GM12878 (cell line): ENCODE measurements at regions of chr5 and their contacts with region 1.

Region 1: GRCh38 chr5:157253547-157253946 is 12.4 kb upstream of the CYFIP2 start:
- DNase-seq: no peak
- ATAC-seq: peak; percentile 82
- H3K4me3 ChIP-seq: peak overlapping the region; percentile 4; the same call in 1 of the 2 replicates
- H3K27ac ChIP-seq: no peak overlapping the region; the same call in 1 of the 2 replicates
- H3K4me1 ChIP-seq: peaks cover 15% of the 10 kb centered on the region
- H3K27me3 ChIP-seq: no peaks in the 10 kb centered on the region
- CTCF ChIP-seq: peak; percentile 85 to 97 (median 88)
- EP300 ChIP-seq: no peak
- POLR2A ChIP-seq: no peak
- RAD21 ChIP-seq: peak; percentile 97

Region 2: GRCh38 chr5:156971415-156971814 is 282.1 kb before region 1 on chr5:
- CTCF ChIA-PET with region 1: no interaction called
- POLR2A ChIA-PET with region 1: no interaction called
- RAD21 ChIA-PET with region 1: no interaction called
- SMC1A ChIA-PET with region 1: no interaction called
- in situ Hi-C with region 1: no loop called
- intact Hi-C with region 1: no loop called
- DNase-seq: no peak
- ATAC-seq: no peak
- H3K4me3 ChIP-seq: no peak overlapping the region
- H3K27ac ChIP-seq: no peak overlapping the region
- H3K4me1 ChIP-seq: no peaks in the 10 kb centered on the region
- H3K27me3 ChIP-seq: no peaks in the 10 kb centered on the region
- CTCF ChIP-seq: no peak
- EP300 ChIP-seq: no peak
- POLR2A ChIP-seq: no peak
- RAD21 ChIP-seq: no peak

Region 3: GRCh38 chr5:157142317-157143126 is 111.0 kb before region 1 on chr5 and contains the start of gene MED7:
- CTCF ChIA-PET with region 1: interaction called, 244 read pairs
- POLR2A ChIA-PET with region 1: interaction called, 5 read pairs
- RAD21 ChIA-PET with region 1: interaction called, 159 read pairs
- SMC1A ChIA-PET with region 1: interaction called, 138 read pairs
- in situ Hi-C with region 1: loop called (anchors 5 kb)
- intact Hi-C with region 1: no loop called
- DNase-seq: peak; percentile 99
- ATAC-seq: peak; percentile 100
- H3K4me3 ChIP-seq: peak within 1 kb of the TSS; percentile 88
- H3K27ac ChIP-seq: peak within 1 kb of the TSS; percentile 99
- H3K4me1 ChIP-seq: peaks cover 7% of the 10 kb centered on the region
- H3K27me3 ChIP-seq: no peaks in the 10 kb centered on the region
- CTCF ChIP-seq: no peak
- EP300 ChIP-seq: no peak
- POLR2A ChIP-seq: peak; percentile 96
- RAD21 ChIP-seq: no peak
- polyA plus RNA-seq, gene MED7: 42.6 to 47.7 TPM

Region 4: DNA sequence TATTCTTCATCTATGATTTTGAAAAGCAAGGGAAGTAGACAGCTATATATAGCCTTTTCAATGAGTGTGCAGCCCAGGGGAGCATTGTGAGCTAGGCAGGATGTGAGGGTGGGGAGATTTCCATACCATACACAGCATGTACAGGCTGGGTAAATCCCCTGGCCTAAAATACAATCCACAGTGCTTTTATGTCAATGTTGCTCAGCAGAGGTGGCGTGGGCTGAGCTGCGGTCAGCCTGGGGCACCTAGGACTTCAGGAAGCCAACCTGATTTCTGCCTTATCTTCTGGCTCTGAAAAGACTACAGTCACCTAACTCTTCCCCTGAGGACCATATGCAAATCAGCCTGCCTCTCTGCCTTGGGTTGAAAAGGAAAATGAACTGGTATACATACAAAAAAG is 81.1 kb before region 1 on chr5:
- CTCF ChIA-PET with region 1: interaction called, 29 read pairs
- POLR2A ChIA-PET with region 1: interaction called, 7 read pairs
- RAD21 ChIA-PET with region 1: interaction called, 44 read pairs
- SMC1A ChIA-PET with region 1: interaction called, 47 read pairs
- in situ Hi-C with region 1: no loop called
- intact Hi-C with region 1: loop called (anchors 1 kb)
- DNase-seq: peak; percentile 98
- ATAC-seq: peak; percentile 98
- H3K4me3 ChIP-seq: no peak overlapping the region
- H3K27ac ChIP-seq: peak overlapping the region; percentile 93
- H3K4me1 ChIP-seq: peaks cover 14% of the 10 kb centered on the region
- H3K27me3 ChIP-seq: no peaks in the 10 kb centered on the region
- CTCF ChIP-seq: no peak
- EP300 ChIP-seq: peak; percentile 88 to 94; a peak in 3 of 4 replicates
- POLR2A ChIP-seq: no peak
- RAD21 ChIP-seq: 0 out of 2 replicates have a peak, but pooled peaks have one; percentile 30

Region 5: DNA sequence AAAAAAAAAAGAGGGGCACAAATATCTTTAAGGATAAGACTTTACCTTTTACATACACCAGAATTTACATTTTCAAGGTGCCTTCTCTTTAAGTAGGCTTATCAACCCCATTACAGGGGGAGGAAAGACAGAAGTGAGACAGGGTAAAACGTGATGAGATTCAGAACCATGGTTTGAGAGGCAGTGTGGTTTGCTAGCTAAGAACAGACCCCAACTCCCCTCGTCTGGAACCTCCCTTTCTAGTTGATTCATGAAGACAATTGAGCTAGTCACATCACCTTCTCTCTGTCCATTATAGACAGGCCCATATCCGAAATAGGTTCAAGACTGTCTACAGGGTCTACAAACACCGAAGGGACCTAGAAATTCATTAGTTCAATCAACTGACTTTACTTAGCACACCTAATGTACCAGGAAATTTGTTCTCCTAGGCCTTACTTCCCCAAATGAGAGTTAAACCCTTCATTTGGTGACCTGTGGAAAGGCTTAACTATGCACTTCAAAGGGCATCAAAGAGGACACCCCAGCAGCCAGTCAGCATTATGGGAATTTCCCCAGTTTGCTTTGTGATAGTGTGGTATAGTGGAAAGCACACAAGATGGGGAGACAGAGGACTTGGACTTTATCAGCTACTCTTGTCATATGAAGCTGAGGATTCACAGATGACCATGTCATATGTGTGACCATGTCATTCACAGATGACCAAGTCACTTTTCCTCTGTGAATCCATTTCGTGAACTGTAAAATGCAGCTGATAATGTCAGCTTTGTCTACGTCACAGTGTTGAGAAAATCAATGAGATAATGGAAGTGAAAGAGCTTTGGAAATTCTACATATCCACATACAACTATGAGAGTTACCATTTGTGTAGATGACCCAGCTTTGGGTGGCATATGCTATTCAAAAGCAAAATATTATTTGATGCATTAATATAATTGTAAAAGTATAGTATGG is 27.8 kb before region 1 on chr5:
- CTCF ChIA-PET with region 1: interaction called, 20 read pairs
- POLR2A ChIA-PET with region 1: interaction called, 6 read pairs
- RAD21 ChIA-PET with region 1: interaction called, 16 read pairs
- SMC1A ChIA-PET with region 1: interaction called, 16 read pairs
- in situ Hi-C with region 1: no loop called
- intact Hi-C with region 1: loop called (anchors 2 kb)
- DNase-seq: no peak
- ATAC-seq: peak; percentile 61
- H3K4me3 ChIP-seq: no peak overlapping the region
- H3K27ac ChIP-seq: no peak overlapping the region
- H3K4me1 ChIP-seq: peaks cover 8% of the 10 kb centered on the region
- H3K27me3 ChIP-seq: no peaks in the 10 kb centered on the region
- CTCF ChIP-seq: no peak
- EP300 ChIP-seq: no peak
- POLR2A ChIP-seq: no peak
- RAD21 ChIP-seq: no peak

Region 6: GRCh38 chr5:157283434-157283833 is 29.9 kb after region 1 on chr5:
- CTCF ChIA-PET with region 1: interaction called, 21 read pairs
- POLR2A ChIA-PET with region 1: no interaction called
- RAD21 ChIA-PET with region 1: interaction called, 10 read pairs
- SMC1A ChIA-PET with region 1: interaction called, 23 read pairs
- in situ Hi-C with region 1: no loop called
- intact Hi-C with region 1: no loop called
- DNase-seq: peak; percentile 65
- ATAC-seq: peak; percentile 99
- H3K4me3 ChIP-seq: no peak overlapping the region
- H3K27ac ChIP-seq: no peak overlapping the region
- H3K4me1 ChIP-seq: peaks cover 21% of the 10 kb centered on the region
- H3K27me3 ChIP-seq: no peaks in the 10 kb centered on the region
- CTCF ChIP-seq: no peak
- EP300 ChIP-seq: no peak
- POLR2A ChIP-seq: no peak
- RAD21 ChIP-seq: no peak

Region 7: DNA sequence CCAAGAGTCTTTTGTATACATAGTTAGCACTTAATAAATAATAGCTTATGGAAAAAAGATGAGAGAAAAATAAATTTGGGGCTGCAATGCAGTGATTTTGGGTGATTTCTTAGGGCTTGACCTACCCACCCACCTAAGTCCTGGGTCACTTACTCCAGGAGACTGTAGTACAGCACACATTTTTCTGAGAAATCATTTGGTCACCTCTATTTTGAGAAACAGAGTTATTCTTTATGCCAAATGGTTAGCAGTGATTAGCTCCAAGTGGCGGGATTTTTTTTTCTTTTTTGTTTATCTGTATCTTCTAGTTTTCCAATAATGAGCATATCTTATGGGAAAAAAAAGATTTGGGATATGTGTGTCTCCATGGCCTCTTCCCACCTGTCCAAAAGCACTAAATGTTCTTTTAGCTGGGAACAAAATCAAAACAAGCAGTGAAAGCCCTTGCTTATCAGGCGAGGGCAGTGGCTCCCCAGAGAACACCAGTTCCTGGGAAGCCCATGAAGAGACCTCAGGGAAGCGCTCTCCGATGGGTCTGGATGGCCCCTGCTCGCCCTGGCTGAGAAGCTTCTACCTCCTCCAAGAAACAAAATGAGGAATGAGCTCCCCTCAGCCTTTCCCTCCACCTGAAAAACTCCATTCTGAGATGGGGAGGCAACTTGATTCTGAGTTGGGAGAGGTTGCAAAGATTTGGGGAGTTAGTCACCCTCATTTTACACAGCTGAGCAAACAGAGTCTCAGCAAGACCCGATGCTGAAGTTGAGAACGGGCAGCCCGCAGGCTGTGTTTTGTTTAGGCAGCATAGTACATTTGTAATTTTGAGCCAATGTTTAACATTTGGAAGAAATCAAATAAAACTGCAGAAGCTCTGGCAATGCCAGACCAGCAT is 82.2 kb after region 1 on chr5:
- CTCF ChIA-PET with region 1: interaction called, 111 read pairs
- POLR2A ChIA-PET with region 1: no interaction called
- RAD21 ChIA-PET with region 1: interaction called, 3 read pairs
- SMC1A ChIA-PET with region 1: interaction called, 13 read pairs
- in situ Hi-C with region 1: no loop called
- intact Hi-C with region 1: no loop called
- DNase-seq: no peak
- ATAC-seq: no peak
- H3K4me3 ChIP-seq: no peak overlapping the region
- H3K27ac ChIP-seq: no peak overlapping the region
- H3K4me1 ChIP-seq: no peaks in the 10 kb centered on the region
- H3K27me3 ChIP-seq: no peaks in the 10 kb centered on the region
- CTCF ChIP-seq: no peak
- EP300 ChIP-seq: no peak
- POLR2A ChIP-seq: no peak
- RAD21 ChIP-seq: no peak

Region 8: DNA sequence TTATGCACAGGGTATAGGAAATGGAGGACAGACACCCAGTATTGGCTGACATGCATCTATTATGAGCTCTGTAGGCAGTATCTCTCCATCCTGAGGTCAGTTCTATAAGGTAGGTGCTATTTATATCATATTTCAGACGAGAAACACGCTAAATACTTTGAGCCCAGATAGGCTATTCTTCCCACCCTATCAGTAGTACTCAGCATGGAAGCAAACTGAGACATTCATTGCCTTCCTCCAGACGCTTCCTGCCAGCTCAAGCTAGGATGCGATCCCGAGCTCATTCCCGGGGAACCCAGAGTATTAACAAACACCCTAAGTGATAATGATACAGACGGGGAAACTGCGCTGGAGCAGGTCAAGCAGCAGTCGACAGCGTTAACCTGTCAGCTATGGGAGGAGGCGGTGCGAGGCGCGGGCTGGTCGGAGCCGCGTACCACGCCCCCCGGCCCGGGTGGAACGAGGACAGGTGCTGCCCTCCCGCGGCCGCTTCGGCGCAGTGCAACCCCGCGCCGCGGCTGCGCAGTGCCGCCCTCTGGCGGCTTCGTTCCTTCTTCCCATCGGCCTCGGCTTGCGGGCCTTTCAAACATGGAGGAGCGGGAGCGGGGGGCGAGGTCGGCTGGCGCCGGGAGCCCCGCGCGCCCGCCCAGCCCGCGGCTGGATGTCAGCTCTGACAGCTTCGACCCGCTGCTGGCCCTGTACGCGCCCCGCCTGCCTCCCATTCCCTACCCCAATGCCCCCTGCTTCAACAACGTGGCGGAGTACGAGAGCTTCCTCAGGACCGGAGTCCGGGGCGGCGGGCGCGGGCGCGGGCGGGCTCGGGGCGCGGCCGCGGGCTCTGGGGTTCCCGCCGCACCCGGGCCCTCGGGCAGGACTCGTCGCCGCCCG is 489.9 kb after region 1 on chr5 and contains the start of gene LSM11:
- CTCF ChIA-PET with region 1: interaction called, 9 read pairs
- POLR2A ChIA-PET with region 1: no interaction called
- RAD21 ChIA-PET with region 1: interaction called, 5 read pairs
- SMC1A ChIA-PET with region 1: interaction called, 4 read pairs
- in situ Hi-C with region 1: no loop called
- intact Hi-C with region 1: loop called (anchors 10 kb)
- DNase-seq: peak; percentile 56
- ATAC-seq: peak; percentile 93
- H3K4me3 ChIP-seq: peak within 1 kb of the TSS; percentile 85
- H3K27ac ChIP-seq: peak within 1 kb of the TSS; percentile 45; the same call in 1 of the 2 replicates
- H3K4me1 ChIP-seq: peaks cover 12% of the 10 kb centered on the region; the same call in 1 of the 2 replicates
- H3K27me3 ChIP-seq: no peaks in the 10 kb centered on the region
- CTCF ChIP-seq: peak; percentile 97 to 100 (median 99); a peak in 5 of 6 replicates
- EP300 ChIP-seq: no peak
- POLR2A ChIP-seq: peak; percentile 64
- RAD21 ChIP-seq: peak; percentile 87
- polyA plus RNA-seq, gene LSM11: 1.5 to 2.1 TPM